PC-3 (cell line): ENCODE measurements at regions of chr13 and their contacts with region 1.

Region 1: GRCh38 chr13:36736119-36736726 is 62.4 kb downstream of the SERTM1 start:
- DNase-seq: peak; percentile 48
- ATAC-seq: no peak; the same call in 1 of the 2 replicates
- H3K4me3 ChIP-seq: no peak overlapping the region
- H3K27ac ChIP-seq: no peak overlapping the region
- H3K4me1 ChIP-seq: no peaks in the 10 kb centered on the region
- H3K27me3 ChIP-seq: no peaks in the 10 kb centered on the region
- CTCF ChIP-seq: peak; percentile 65

Region 2: GRCh38 chr13:35978603-35979316 is 757.5 kb before region 1 on chr13:
- CTCF ChIA-PET with region 1: no interaction called
- POLR2A ChIA-PET with region 1: no interaction called
- intact Hi-C with region 1: loop called (anchors 10 kb)
- DNase-seq: peak; percentile 72
- ATAC-seq: peak; percentile 46
- H3K4me3 ChIP-seq: no peak overlapping the region
- H3K27ac ChIP-seq: no peak overlapping the region; the same call in 1 of the 2 replicates
- H3K4me1 ChIP-seq: peaks cover 12% of the 10 kb centered on the region
- H3K27me3 ChIP-seq: no peaks in the 10 kb centered on the region
- CTCF ChIP-seq: peak; percentile 80

Region 3: DNA sequence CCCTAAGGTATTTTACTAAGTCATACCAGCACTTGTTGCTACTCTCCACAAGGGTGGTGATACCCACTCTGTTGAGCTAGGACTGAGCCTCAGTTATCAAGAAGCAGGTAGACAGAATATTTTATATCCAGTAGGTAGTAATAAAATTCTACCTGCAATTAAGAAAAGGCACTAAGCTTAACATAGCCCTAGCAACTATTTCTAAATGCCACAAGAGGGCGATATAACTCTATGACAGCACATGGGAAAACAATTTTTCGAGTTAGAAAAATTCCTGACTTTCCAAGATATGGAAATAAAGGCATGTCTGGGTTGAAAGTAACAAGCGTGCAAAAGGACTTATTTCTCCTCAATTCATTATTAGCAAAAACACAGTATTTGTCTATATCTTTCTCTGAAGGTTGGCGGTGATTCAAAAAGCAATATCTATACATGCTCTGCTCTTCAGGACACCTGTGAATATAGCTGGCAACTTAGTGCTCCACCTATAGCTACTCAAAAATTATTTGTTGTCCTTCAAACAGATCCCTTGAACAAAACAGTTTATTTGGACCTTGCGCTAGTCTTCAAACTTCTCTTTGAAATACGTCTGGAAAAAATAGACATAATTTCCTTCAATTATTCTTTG is 453.3 kb before region 1 on chr13:
- CTCF ChIA-PET with region 1: interaction called, 3 read pairs
- POLR2A ChIA-PET with region 1: no interaction called
- intact Hi-C with region 1: loop called (anchors 1 kb)
- DNase-seq: peak; percentile 60
- ATAC-seq: peak; percentile 59
- H3K4me3 ChIP-seq: no peak overlapping the region
- H3K27ac ChIP-seq: no peak overlapping the region
- H3K4me1 ChIP-seq: no peaks in the 10 kb centered on the region
- H3K27me3 ChIP-seq: no peaks in the 10 kb centered on the region
- CTCF ChIP-seq: peak; percentile 84

Region 4: DNA sequence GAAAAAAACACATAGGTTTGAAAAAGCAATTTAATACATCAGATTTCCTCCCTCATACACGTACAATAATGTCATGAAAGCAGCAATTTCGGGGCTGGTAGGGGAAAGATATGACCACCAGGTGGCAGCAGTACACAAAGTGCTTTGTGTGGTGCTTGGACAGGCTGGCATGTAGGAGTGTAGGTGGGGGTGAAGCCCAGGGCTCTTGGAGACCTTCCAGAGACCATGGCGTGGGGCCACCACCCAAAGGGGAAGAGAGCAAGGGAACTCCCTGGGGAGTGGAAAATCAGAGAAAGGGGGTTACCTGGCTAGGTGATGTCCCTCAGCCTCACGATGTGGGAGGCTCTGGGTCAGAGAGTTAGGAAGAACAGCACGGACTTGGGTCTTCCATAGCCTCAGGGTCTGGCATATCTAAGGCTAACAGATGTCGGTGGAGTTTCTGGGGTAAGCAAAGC is 315.8 kb before region 1 on chr13:
- CTCF ChIA-PET with region 1: no interaction called
- POLR2A ChIA-PET with region 1: no interaction called
- intact Hi-C with region 1: loop called (anchors 2 kb)
- DNase-seq: peak; percentile 81
- ATAC-seq: peak; percentile 94
- H3K4me3 ChIP-seq: no peak overlapping the region
- H3K27ac ChIP-seq: no peak overlapping the region
- H3K4me1 ChIP-seq: peaks cover 20% of the 10 kb centered on the region; the same call in 1 of the 2 replicates
- H3K27me3 ChIP-seq: no peaks in the 10 kb centered on the region
- CTCF ChIP-seq: peak; percentile 88

Region 5: GRCh38 chr13:36453516-36453915 is 282.7 kb before region 1 on chr13:
- CTCF ChIA-PET with region 1: interaction called, 3 read pairs
- POLR2A ChIA-PET with region 1: no interaction called
- intact Hi-C with region 1: loop called (anchors 1 kb)
- DNase-seq: peak; percentile 15
- ATAC-seq: peak; percentile 46; the same call in 1 of the 2 replicates
- H3K4me3 ChIP-seq: no peak overlapping the region
- H3K27ac ChIP-seq: no peak overlapping the region
- H3K4me1 ChIP-seq: no peaks in the 10 kb centered on the region
- H3K27me3 ChIP-seq: no peaks in the 10 kb centered on the region
- CTCF ChIP-seq: peak; percentile 50; the same call in 1 of the 2 replicates

Region 6: GRCh38 chr13:36706755-36707154 is 29.5 kb before region 1 on chr13:
- CTCF ChIA-PET with region 1: no interaction called
- POLR2A ChIA-PET with region 1: no interaction called
- intact Hi-C with region 1: no loop called
- DNase-seq: no peak
- ATAC-seq: no peak
- H3K4me3 ChIP-seq: no peak overlapping the region
- H3K27ac ChIP-seq: no peak overlapping the region
- H3K4me1 ChIP-seq: no peaks in the 10 kb centered on the region
- H3K27me3 ChIP-seq: peaks cover 4% of the 10 kb centered on the region; the same call in 1 of the 2 replicates
- CTCF ChIP-seq: no peak

Region 7: DNA sequence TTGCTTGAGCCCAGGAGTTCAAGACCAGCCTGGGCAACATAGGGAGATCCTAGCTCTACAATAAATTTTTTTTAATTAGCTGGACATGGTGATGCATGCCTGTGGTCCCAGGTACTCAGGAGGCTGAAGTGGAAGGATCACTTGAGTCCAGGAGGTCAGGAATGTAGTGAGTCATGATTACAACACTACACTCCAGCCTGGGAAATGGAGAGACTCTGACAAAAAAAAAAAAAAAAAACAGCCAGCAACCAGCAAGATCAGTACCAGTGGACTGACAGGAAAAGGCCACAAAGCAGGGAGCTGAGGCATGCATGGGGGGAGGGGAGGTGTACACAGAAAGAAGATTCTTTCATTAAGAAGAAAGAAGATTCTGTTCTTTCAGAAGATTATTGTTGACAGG is 30.1 kb after region 1 on chr13:
- CTCF ChIA-PET with region 1: no interaction called
- POLR2A ChIA-PET with region 1: interaction called, 10 read pairs
- intact Hi-C with region 1: no loop called
- DNase-seq: peak; percentile 60
- ATAC-seq: no peak
- H3K4me3 ChIP-seq: no peak overlapping the region
- H3K27ac ChIP-seq: no peak overlapping the region
- H3K4me1 ChIP-seq: peaks cover 8% of the 10 kb centered on the region; the same call in 1 of the 2 replicates
- H3K27me3 ChIP-seq: no peaks in the 10 kb centered on the region
- CTCF ChIP-seq: no peak